ENCODE measurements at regions of chr1 and their contacts with region 1.

Region 1: DNA sequence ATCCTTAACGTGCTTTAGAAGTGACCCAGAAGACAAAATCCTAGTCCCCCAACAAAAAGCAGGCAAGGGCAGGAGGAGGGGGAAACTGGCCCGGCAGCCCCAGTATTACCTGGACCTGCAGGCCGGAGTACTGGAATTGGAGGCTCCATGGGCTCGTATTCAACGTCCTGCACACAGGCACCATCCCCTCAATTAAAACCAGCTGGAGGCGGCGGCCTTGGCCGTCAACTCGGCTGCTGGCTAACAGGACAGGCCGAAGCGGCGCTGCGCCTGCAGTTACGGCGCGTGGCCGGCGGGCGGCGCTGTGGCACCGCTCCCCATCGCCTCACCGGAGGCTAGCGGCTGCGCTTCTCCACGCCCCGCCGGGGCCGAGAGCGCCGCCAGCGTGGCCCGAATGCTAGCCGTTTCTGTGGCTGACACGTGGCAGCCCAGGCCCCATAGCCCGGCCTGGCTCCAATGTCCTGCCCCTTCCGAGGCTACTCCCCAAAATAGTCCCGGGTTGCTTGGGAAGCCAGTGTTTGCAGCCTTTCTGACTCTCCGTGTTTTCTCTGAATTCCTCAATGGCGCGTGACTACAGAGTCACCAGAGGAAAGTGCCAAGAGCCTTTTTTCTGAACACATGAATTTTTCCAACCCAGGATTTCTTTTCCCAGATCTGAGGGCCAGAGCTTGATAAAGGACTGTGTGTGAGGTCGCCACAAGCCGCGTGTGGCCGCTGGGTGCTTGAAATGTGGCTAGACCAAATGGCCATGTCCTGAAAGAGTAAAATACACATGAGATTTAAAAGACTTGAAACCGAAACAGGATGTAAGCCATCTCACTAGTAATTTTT is 82.5 kb downstream of the HHIPL2 start:
- DNase-seq: peak; percentile 89
- ATAC-seq: peak; percentile 93
- H3K4me3 Mint-ChIP-seq: peak overlapping the region; percentile 92
- H3K27ac Mint-ChIP-seq: peak overlapping the region; percentile 98
- H3K4me1 Mint-ChIP-seq: peaks cover 13% of the 10 kb centered on the region
- H3K27me3 Mint-ChIP-seq: peaks cover 6% of the 10 kb centered on the region
- CTCF ChIP-seq: peak; percentile 100

Region 2: DNA sequence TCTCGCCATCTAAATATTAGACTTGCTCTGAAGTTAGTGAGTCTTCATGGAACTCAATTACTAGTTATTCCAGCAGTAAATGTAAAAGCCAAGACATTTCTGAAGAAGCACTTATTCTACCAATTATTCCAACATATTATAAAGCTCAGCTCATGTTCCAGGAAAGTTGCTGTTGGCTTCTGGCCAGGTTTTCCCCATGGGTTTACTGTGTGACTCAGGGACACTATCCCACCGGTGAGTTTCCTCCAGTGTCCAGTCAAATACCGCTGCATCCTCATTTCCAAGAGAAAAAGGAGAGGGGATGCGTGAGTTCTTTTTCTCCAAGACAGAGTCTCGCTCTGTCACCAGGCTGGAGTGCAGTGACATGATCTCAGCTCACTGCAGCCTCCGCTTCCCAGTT is 91.7 kb after region 1 on chr1:
- CTCF ChIA-PET with region 1: no interaction called
- POLR2A ChIA-PET with region 1: no interaction called
- intact Hi-C with region 1: loop called (anchors 5 kb)
- DNase-seq: no peak
- ATAC-seq: no peak
- H3K4me3 Mint-ChIP-seq: no peak overlapping the region
- H3K27ac Mint-ChIP-seq: no peak overlapping the region
- H3K4me1 Mint-ChIP-seq: peaks cover 3% of the 10 kb centered on the region
- H3K27me3 Mint-ChIP-seq: no peaks in the 10 kb centered on the region
- CTCF ChIP-seq: no peak

Region 3: GRCh38 chr1:222617367-222617951 is 152.0 kb after region 1 on chr1:
- CTCF ChIA-PET with region 1: no interaction called
- POLR2A ChIA-PET with region 1: no interaction called
- intact Hi-C with region 1: loop called (anchors 1 kb)
- DNase-seq: peak; percentile 80
- ATAC-seq: peak; percentile 92
- H3K4me3 Mint-ChIP-seq: peak overlapping the region; percentile 93
- H3K27ac Mint-ChIP-seq: peak overlapping the region; percentile 91
- H3K4me1 Mint-ChIP-seq: peaks cover 28% of the 10 kb centered on the region
- H3K27me3 Mint-ChIP-seq: peaks cover 20% of the 10 kb centered on the region
- CTCF ChIP-seq: no peak

Region 4: DNA sequence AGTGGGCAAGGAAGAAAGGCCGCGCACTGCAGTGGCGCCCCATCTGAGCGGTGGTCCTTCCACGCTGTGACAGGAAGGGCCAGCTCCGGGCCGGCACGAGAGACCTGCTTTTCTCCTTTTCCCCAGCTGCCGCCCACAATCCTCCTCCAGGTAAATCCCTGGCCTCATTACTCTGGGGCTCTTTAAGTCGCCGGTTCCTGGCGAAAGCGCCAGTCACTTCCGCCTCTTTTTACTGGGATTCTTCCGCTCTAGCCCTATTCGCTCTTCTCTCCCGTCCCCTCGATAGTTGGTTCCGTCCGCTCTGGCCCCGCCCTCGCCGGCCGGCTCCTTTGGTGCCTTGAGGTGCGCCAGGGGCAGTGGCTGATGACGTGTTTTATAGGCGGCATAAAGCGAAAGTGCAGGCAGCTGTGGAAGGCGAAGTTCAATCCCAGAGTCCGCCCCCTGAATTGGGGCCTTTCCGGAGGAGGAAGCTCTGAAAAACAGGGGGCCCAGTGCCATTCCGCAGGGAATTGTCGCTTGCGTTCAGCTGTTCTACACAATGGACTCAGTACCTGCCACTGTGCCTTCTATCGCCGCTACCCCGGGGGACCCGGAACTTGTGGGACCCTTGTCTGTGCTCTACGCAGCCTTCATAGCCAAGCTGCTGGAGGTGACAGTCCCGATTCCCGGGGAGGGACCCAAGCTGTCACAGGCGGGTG is 178.7 kb after region 1 on chr1:
- CTCF ChIA-PET with region 1: interaction called, 8 read pairs
- POLR2A ChIA-PET with region 1: interaction called, 19 read pairs
- intact Hi-C with region 1: loop called (anchors 2 kb)
- DNase-seq: peak; percentile 94
- ATAC-seq: peak; percentile 96
- H3K4me3 Mint-ChIP-seq: peak overlapping the region; percentile 100
- H3K27ac Mint-ChIP-seq: peak overlapping the region; percentile 99
- H3K4me1 Mint-ChIP-seq: peaks cover 25% of the 10 kb centered on the region
- H3K27me3 Mint-ChIP-seq: no peaks in the 10 kb centered on the region
- CTCF ChIP-seq: no peak

Region 5: DNA sequence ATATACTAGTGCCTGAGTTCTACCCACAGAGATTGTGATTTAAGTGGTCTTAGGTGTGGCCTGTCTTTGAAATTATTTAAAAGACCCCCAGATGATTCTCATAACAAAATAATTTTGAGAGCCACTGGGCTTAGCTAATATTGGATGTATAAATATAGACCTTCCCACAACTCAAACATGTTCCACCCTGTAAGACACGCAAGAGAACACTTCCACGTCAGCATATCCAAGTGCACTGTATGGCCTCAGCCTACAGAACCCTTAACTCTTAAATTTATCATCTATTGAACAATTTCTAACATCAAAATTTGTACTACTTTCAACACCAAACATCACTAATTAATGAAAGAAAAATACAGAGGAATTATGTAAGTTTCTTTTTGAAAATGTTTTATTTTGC is 274.0 kb after region 1 on chr1:
- CTCF ChIA-PET with region 1: no interaction called
- POLR2A ChIA-PET with region 1: no interaction called
- intact Hi-C with region 1: loop called (anchors 2 kb)
- DNase-seq: no peak
- ATAC-seq: peak; percentile 40
- H3K4me3 Mint-ChIP-seq: no peak overlapping the region
- H3K27ac Mint-ChIP-seq: no peak overlapping the region
- H3K4me1 Mint-ChIP-seq: peaks cover 43% of the 10 kb centered on the region
- H3K27me3 Mint-ChIP-seq: no peaks in the 10 kb centered on the region
- CTCF ChIP-seq: no peak

Region 6: GRCh38 chr1:223081181-223081994 is 616.0 kb after region 1 on chr1:
- CTCF ChIA-PET with region 1: no interaction called
- POLR2A ChIA-PET with region 1: no interaction called
- intact Hi-C with region 1: loop called (anchors 1 kb)
- DNase-seq: peak; percentile 71
- ATAC-seq: peak; percentile 99
- H3K4me3 Mint-ChIP-seq: peak overlapping the region; percentile 83
- H3K27ac Mint-ChIP-seq: peak overlapping the region; percentile 80
- H3K4me1 Mint-ChIP-seq: peaks cover 3% of the 10 kb centered on the region
- H3K27me3 Mint-ChIP-seq: peaks cover 5% of the 10 kb centered on the region
- CTCF ChIP-seq: peak; percentile 92

Measured in activated B cell treated with CpG ODN at 0.5 μM for 24 hours (primary cell).